Activated CD4-positive, alpha-beta memory T cell treated with anti-CD3 and anti-CD28 coated beads for 36 hours (primary cell): ENCODE measurements at regions of chr9 and their contacts with region 1.

Region 1: GRCh38 chr9:77744841-77745430 is 96.8 kb upstream of the GNA14 start:
- DNase-seq: no peak
- H3K4me3 Mint-ChIP-seq: no peak overlapping the region
- H3K27ac Mint-ChIP-seq: peak overlapping the region; percentile 58
- H3K4me1 Mint-ChIP-seq: peaks cover 35% of the 10 kb centered on the region
- H3K27me3 Mint-ChIP-seq: no peaks in the 10 kb centered on the region

Region 2: GRCh38 chr9:77731008-77731698 is 13.8 kb before region 1 on chr9:
- CTCF ChIA-PET with region 1: interaction called, 19 read pairs
- POLR2A ChIA-PET with region 1: no interaction called
- intact Hi-C with region 1: loop called (anchors 1 kb)
- DNase-seq: no peak
- H3K4me3 Mint-ChIP-seq: no peak overlapping the region
- H3K27ac Mint-ChIP-seq: no peak overlapping the region
- H3K4me1 Mint-ChIP-seq: peaks cover 45% of the 10 kb centered on the region
- H3K27me3 Mint-ChIP-seq: no peaks in the 10 kb centered on the region

Region 3: DNA sequence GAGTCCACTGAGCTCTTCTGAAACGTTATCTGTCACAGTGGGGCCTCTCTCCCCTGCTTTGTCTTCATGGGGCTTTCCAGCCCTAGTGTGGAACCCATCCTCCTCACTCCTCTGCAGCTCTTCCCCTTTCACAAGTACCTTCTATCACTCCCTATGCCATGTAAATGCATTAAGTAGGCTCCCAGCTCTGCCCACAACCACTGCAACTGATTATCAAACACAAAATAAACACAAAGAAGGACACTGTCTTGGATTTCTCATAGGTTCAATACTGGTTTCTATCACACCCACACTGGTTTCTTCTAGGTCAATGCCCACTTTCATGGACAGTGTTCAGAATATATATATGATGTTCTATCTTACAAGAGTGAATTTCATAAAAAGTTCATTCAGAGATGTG is 147.2 kb after region 1 on chr9:
- CTCF ChIA-PET with region 1: no interaction called
- POLR2A ChIA-PET with region 1: no interaction called
- intact Hi-C with region 1: no loop called
- DNase-seq: peak; percentile 18
- H3K4me3 Mint-ChIP-seq: no peak overlapping the region
- H3K27ac Mint-ChIP-seq: peak overlapping the region; percentile 58
- H3K4me1 Mint-ChIP-seq: peaks cover 18% of the 10 kb centered on the region
- H3K27me3 Mint-ChIP-seq: no peaks in the 10 kb centered on the region